A673 (cell line): ENCODE measurements at regions of chr10 and their contacts with region 1.

Region 1: DNA sequence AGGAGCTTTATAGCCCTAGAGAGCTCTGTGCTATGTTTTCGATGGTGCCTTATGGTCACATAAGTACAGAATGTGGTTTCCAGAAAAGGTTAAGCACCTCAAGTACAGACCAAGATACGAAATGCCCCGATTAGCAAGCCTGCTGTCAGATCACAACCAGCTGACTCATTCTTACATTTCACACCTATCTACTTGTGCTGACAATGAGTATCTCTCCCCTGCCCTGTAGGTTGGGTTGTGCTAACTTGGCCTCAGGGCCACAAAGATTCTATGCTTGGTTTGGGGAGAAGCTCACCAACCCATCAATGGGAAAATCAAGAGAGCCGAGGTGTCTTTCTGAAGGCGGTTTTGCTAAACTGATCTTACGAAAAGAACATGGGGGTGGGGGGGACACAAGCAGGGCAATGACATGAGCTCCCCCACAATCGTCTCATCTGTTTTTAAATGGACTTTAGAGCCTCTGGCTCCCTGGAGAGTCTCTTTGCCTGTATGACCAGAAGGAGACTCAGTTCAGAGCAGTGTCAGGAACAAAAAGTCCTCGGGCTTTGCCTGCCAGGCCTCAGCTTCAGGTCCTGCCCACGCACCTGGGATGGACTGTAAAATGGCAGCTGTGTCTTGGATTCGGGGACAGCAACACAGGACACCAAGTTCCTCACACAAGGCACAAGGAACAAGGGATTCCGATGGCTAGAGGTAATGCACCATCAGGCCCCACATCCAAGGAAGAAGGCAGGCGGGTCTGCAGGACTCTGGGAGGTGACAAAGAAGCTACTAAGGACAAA is 55.1 kb downstream of the FAM53B start:
- DNase-seq: no peak
- H3K4me3 ChIP-seq: no peak overlapping the region
- H3K27ac ChIP-seq: no peak overlapping the region
- H3K4me1 ChIP-seq: peaks cover 6% of the 10 kb centered on the region
- H3K27me3 ChIP-seq: no peaks in the 10 kb centered on the region
- CTCF ChIP-seq: no peak

Region 2: DNA sequence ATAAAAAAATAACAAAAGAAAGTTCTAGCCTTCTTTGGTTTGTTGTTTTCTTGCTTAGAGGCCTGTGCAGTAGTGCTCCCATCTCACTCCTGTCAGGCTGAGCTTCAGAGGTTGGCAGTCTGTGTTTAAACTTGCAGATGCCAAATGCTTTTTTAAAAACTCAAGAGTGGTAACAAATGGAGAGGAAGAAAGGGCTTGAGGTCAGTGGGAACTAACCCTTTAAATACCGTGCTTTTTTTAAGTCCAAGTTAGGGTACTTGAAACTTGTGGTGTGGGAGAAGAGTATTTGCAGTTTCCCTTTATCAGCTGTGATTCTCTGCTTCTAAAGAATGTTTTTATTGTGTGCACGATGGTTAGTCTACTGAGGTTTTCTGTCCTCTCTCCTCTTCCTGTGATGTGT is 282.2 kb after region 1 on chr10:
- CTCF ChIA-PET with region 1: no interaction called
- POLR2A ChIA-PET with region 1: interaction called, 18 read pairs
- intact Hi-C with region 1: no loop called
- DNase-seq: no peak
- H3K4me3 ChIP-seq: no peak overlapping the region
- H3K27ac ChIP-seq: no peak overlapping the region
- H3K4me1 ChIP-seq: no peaks in the 10 kb centered on the region
- H3K27me3 ChIP-seq: no peaks in the 10 kb centered on the region
- CTCF ChIP-seq: no peak